MCF 10A (cell line): ENCODE measurements at regions of chr4 and their contacts with region 1.

Region 1: DNA sequence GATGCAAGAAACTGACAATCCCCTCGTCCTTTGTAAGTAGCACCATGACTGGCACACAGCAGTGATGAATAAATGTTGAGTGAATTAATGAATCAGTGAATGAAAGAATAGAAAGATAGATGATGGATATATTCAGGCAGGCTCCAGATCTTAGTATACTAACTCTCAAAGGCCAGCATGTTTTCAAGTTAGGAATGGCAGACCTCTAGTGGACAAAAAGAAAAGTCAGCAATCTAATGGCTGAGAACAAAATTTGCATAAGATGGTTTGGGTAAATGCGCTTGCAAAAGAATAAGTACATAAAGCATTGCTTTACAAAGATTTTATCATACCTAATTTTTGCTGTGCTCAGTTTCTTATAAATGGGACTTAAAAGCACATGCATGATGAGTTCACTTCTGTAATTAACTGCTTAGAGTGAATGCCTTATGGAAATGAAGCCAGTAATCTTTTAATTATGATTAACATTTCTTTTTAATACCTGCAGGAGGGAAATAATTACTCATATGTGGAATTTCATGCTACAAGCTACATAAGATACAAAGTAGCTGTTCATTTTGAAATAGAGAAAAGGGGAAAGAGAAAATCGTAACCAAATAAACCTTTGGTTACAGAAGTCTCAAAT is 126.9 kb upstream of the GPRIN3 start:
- DNase-seq: peak; percentile 54
- H3K4me3 Mint-ChIP-seq: no peak overlapping the region
- H3K27ac Mint-ChIP-seq: no peak overlapping the region
- H3K4me1 Mint-ChIP-seq: peaks cover 8% of the 10 kb centered on the region
- H3K27me3 Mint-ChIP-seq: no peaks in the 10 kb centered on the region
- CTCF ChIP-seq: peak; percentile 73

Region 2: DNA sequence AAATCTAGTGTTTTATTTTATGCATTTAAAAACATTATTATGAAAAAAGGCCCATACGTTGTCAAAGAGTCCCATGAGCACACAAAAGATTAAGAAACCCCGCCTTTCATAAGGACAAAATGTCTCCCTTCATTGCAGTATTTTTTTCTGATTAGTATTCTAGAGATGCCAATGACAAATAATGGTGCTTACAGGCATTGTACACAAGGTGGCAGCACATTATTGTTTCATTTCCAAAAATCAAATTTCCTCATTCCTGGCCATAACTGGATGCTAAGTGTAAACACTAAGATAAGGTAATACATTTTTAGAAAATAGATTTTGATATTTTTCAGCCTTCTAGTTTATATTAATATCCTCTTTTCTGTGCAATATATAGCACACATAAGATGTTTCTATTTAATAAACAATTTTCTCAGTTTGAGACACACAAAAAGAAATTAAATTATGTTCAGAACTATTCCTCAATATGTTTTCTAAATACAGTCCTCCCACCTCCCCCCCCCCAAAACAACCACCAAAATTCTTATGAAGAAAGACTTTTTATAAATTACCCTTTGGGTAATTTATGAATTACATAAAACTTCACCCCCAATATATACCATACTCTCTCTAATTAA is 275.5 kb before region 1 on chr4:
- CTCF ChIA-PET with region 1: interaction called, 44 read pairs
- POLR2A ChIA-PET with region 1: interaction called, 3 read pairs
- intact Hi-C with region 1: loop called (anchors 1 kb)
- DNase-seq: peak; percentile 65
- H3K4me3 Mint-ChIP-seq: no peak overlapping the region
- H3K27ac Mint-ChIP-seq: no peak overlapping the region
- H3K4me1 Mint-ChIP-seq: peaks cover 6% of the 10 kb centered on the region
- H3K27me3 Mint-ChIP-seq: no peaks in the 10 kb centered on the region
- CTCF ChIP-seq: peak; percentile 35

Region 3: GRCh38 chr4:89164400-89164799 is 270.1 kb before region 1 on chr4:
- CTCF ChIA-PET with region 1: interaction called, 44 read pairs
- POLR2A ChIA-PET with region 1: no interaction called
- intact Hi-C with region 1: loop called (anchors 1 kb)
- DNase-seq: no peak
- H3K4me3 Mint-ChIP-seq: no peak overlapping the region
- H3K27ac Mint-ChIP-seq: no peak overlapping the region
- H3K4me1 Mint-ChIP-seq: no peaks in the 10 kb centered on the region
- H3K27me3 Mint-ChIP-seq: no peaks in the 10 kb centered on the region
- CTCF ChIP-seq: peak; percentile 17

Region 4: GRCh38 chr4:89226665-89227574 is 207.6 kb before region 1 on chr4:
- CTCF ChIA-PET with region 1: interaction called, 116 read pairs
- POLR2A ChIA-PET with region 1: interaction called, 5 read pairs
- intact Hi-C with region 1: loop called (anchors 1 kb)
- DNase-seq: peak; percentile 88
- H3K4me3 Mint-ChIP-seq: no peak overlapping the region
- H3K27ac Mint-ChIP-seq: no peak overlapping the region
- H3K4me1 Mint-ChIP-seq: peaks cover 5% of the 10 kb centered on the region
- H3K27me3 Mint-ChIP-seq: no peaks in the 10 kb centered on the region
- CTCF ChIP-seq: peak; percentile 65

Region 5: DNA sequence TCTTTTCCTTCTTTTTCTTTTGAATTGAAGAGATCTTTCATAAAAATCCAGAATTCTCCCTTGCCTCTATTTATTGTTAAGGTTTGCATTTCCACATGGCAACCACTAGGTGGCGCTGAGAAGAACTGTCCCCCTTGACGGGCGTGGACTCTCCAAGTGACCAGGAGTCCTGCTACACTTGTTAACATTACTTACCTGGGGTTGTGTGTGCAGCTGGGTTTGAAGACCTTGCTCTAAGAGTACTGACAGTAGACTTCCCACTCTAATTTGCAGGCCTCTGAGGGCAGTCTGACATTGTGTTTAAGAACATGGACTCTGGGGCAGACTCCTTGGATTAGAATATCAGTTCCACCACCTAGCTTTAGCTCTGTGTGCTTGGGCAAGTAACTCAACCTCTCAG is 179.6 kb before region 1 on chr4:
- CTCF ChIA-PET with region 1: interaction called, 10 read pairs
- POLR2A ChIA-PET with region 1: interaction called, 3 read pairs
- intact Hi-C with region 1: loop called (anchors 1 kb)
- DNase-seq: peak; percentile 62
- H3K4me3 Mint-ChIP-seq: no peak overlapping the region
- H3K27ac Mint-ChIP-seq: no peak overlapping the region
- H3K4me1 Mint-ChIP-seq: no peaks in the 10 kb centered on the region
- H3K27me3 Mint-ChIP-seq: no peaks in the 10 kb centered on the region
- CTCF ChIP-seq: peak; percentile 77

Region 6: GRCh38 chr4:89446193-89446592 is 11.7 kb after region 1 on chr4:
- CTCF ChIA-PET with region 1: no interaction called
- POLR2A ChIA-PET with region 1: no interaction called
- intact Hi-C with region 1: no loop called
- DNase-seq: no peak
- H3K4me3 Mint-ChIP-seq: no peak overlapping the region
- H3K27ac Mint-ChIP-seq: no peak overlapping the region
- H3K4me1 Mint-ChIP-seq: no peaks in the 10 kb centered on the region
- H3K27me3 Mint-ChIP-seq: no peaks in the 10 kb centered on the region
- CTCF ChIP-seq: no peak

Region 7: DNA sequence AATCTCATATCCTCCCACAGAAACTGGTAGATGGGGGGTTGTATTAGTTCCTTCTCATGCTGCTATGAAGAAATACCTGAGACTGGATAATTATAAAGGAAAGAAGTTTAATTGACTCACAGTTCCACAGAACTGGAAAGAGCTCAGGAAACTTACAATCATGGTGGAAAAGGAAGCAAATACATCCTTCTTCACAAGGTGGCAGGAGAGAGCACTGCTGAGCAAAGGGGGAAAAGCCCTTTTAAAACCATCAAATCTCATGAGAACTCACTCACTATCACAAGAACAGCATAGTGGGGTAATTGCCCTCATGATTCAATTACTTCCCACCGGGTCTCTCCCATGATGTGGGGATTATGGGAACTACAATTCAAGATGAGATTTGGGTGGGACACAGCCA is 123.7 kb after region 1 on chr4:
- CTCF ChIA-PET with region 1: no interaction called
- POLR2A ChIA-PET with region 1: no interaction called
- intact Hi-C with region 1: no loop called
- DNase-seq: peak; percentile 31
- H3K4me3 Mint-ChIP-seq: no peak overlapping the region
- H3K27ac Mint-ChIP-seq: no peak overlapping the region
- H3K4me1 Mint-ChIP-seq: peaks cover 3% of the 10 kb centered on the region
- H3K27me3 Mint-ChIP-seq: no peaks in the 10 kb centered on the region
- CTCF ChIP-seq: peak; percentile 27

Region 8: DNA sequence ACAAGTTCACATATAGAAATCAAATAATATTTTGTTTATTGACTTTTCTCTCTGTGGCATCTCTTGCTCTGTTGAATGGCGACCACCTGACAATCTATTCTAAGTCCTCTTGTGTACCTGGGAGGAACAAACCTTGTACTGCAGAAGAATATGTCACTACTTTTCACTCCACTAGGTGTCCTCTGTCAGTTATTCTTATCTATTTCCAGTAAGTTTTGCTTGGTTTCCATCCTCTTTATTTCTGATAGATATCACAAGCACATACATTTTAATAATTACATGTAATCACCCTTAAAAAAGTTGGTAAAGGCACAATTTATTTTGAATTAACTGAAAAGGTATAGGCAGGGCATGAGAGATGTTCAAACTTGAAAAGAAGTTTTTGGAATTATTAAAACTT is 164.1 kb after region 1 on chr4:
- CTCF ChIA-PET with region 1: no interaction called
- POLR2A ChIA-PET with region 1: no interaction called
- intact Hi-C with region 1: no loop called
- DNase-seq: peak; percentile 41
- H3K4me3 Mint-ChIP-seq: no peak overlapping the region
- H3K27ac Mint-ChIP-seq: no peak overlapping the region
- H3K4me1 Mint-ChIP-seq: no peaks in the 10 kb centered on the region
- H3K27me3 Mint-ChIP-seq: no peaks in the 10 kb centered on the region
- CTCF ChIP-seq: peak; percentile 38

Region 9: GRCh38 chr4:89898304-89898716 is 463.8 kb after region 1 on chr4:
- CTCF ChIA-PET with region 1: interaction called, 3 read pairs
- POLR2A ChIA-PET with region 1: no interaction called
- intact Hi-C with region 1: loop called (anchors 1 kb)
- DNase-seq: no peak
- H3K4me3 Mint-ChIP-seq: no peak overlapping the region
- H3K27ac Mint-ChIP-seq: no peak overlapping the region
- H3K4me1 Mint-ChIP-seq: no peaks in the 10 kb centered on the region
- H3K27me3 Mint-ChIP-seq: no peaks in the 10 kb centered on the region
- CTCF ChIP-seq: no peak